Endothelial cell of umbilical vein (primary cell): ENCODE measurements at regions of chr2 and their contacts with region 1.

Region 1: GRCh38 chr2:63841254-63842022 is at the start of gene UGP2:
- DNase-seq: peak; percentile 92
- H3K4me3 ChIP-seq: peak within 1 kb of the TSS; percentile 91 to 96 (median 95)
- H3K27ac ChIP-seq: peak within 1 kb of the TSS; percentile 81
- H3K4me1 ChIP-seq: peaks cover 16% of the 10 kb centered on the region
- H3K27me3 ChIP-seq: no peaks in the 10 kb centered on the region
- CTCF ChIP-seq: peak in 1 of 2 donors; percentile 26
- POLR2A ChIP-seq: peak; percentile 84
- total RNA-seq, gene UGP2: 57.7 and 63.9 TPM in 2 replicates

Region 2: GRCh38 chr2:63530880-63531279 is 310.6 kb before region 1 on chr2:
- CTCF ChIA-PET with region 1: no interaction called
- POLR2A ChIA-PET with region 1: no interaction called
- dilution Hi-C with region 1: no loop called
- intact Hi-C with region 1: no loop called
- DNase-seq: no peak
- H3K4me3 ChIP-seq: no peak overlapping the region
- H3K27ac ChIP-seq: no peak overlapping the region
- H3K4me1 ChIP-seq: no peaks in the 10 kb centered on the region
- H3K27me3 ChIP-seq: no peaks in the 10 kb centered on the region
- CTCF ChIP-seq: no peak
- POLR2A ChIP-seq: no peak

Region 3: GRCh38 chr2:63588385-63589147 is 252.9 kb before region 1 on chr2 and contains the starts of genes MDH1 and WDPCP:
- CTCF ChIA-PET with region 1: no interaction called
- POLR2A ChIA-PET with region 1: interaction called, 6 read pairs
- dilution Hi-C with region 1: no loop called
- intact Hi-C with region 1: loop called (anchors 2 kb)
- DNase-seq: peak; percentile 99
- H3K4me3 ChIP-seq: peak within 1 kb of the TSS; percentile 62 to 89 (median 85)
- H3K27ac ChIP-seq: peak within 1 kb of the TSS; percentile 67
- H3K4me1 ChIP-seq: peaks cover 18% of the 10 kb centered on the region
- H3K27me3 ChIP-seq: no peaks in the 10 kb centered on the region
- CTCF ChIP-seq: no peak
- POLR2A ChIP-seq: peak; percentile 84
- total RNA-seq, gene MDH1: 98.8 and 107 TPM in 2 replicates
- total RNA-seq, gene WDPCP: 6.9 and 8.8 TPM in 2 replicates

Region 4: GRCh38 chr2:63692002-63692606 is 149.3 kb before region 1 on chr2:
- CTCF ChIA-PET with region 1: interaction called, 11 read pairs
- POLR2A ChIA-PET with region 1: no interaction called
- dilution Hi-C with region 1: no loop called
- intact Hi-C with region 1: no loop called
- DNase-seq: peak; percentile 78
- H3K4me3 ChIP-seq: no peak overlapping the region
- H3K27ac ChIP-seq: no peak overlapping the region
- H3K4me1 ChIP-seq: no peaks in the 10 kb centered on the region
- H3K27me3 ChIP-seq: no peaks in the 10 kb centered on the region
- CTCF ChIP-seq: peak; percentile 17 to 19
- POLR2A ChIP-seq: no peak

Region 5: GRCh38 chr2:63743982-63744966 is 97.2 kb before region 1 on chr2:
- CTCF ChIA-PET with region 1: no interaction called
- POLR2A ChIA-PET with region 1: interaction called, 6 read pairs
- dilution Hi-C with region 1: no loop called
- intact Hi-C with region 1: loop called (anchors 2 kb)
- DNase-seq: no peak
- H3K4me3 ChIP-seq: no peak overlapping the region
- H3K27ac ChIP-seq: no peak overlapping the region
- H3K4me1 ChIP-seq: peaks cover 19% of the 10 kb centered on the region
- H3K27me3 ChIP-seq: no peaks in the 10 kb centered on the region
- CTCF ChIP-seq: no peak
- POLR2A ChIP-seq: no peak

Region 6: GRCh38 chr2:63891488-63892030 is 50.1 kb after region 1 on chr2:
- CTCF ChIA-PET with region 1: no interaction called
- POLR2A ChIA-PET with region 1: no interaction called
- dilution Hi-C with region 1: no loop called
- intact Hi-C with region 1: no loop called
- DNase-seq: no peak
- H3K4me3 ChIP-seq: no peak overlapping the region
- H3K27ac ChIP-seq: no peak overlapping the region
- H3K4me1 ChIP-seq: no peaks in the 10 kb centered on the region
- H3K27me3 ChIP-seq: no peaks in the 10 kb centered on the region
- CTCF ChIP-seq: no peak
- POLR2A ChIP-seq: no peak

Region 7: DNA sequence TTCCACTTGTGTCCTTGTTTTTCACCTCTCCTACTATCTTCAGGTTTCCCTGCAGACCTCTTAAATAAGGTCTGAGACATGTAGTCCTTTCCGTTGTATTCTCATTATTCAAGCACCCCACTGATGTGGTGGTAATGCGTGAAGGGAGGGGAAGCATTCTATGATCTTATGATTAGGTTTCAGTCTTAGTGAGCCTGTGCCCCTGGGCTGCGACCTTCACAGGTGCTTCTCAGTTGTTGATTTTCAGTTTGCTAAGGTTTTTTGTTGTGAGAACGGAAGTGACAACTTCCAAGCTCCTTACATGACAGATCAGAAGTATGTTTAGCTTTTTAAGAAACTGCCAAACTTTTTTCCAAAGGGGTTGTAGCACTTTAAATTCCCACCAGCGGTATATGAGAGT is 136.5 kb after region 1 on chr2:
- CTCF ChIA-PET with region 1: no interaction called
- POLR2A ChIA-PET with region 1: no interaction called
- dilution Hi-C with region 1: no loop called
- intact Hi-C with region 1: no loop called
- DNase-seq: no peak
- H3K4me3 ChIP-seq: no peak overlapping the region
- H3K27ac ChIP-seq: no peak overlapping the region
- H3K4me1 ChIP-seq: no peaks in the 10 kb centered on the region
- H3K27me3 ChIP-seq: no peaks in the 10 kb centered on the region
- CTCF ChIP-seq: no peak
- POLR2A ChIP-seq: no peak